ENCODE measurements at regions of chr19 and their contacts with region 1.

Region 1: DNA sequence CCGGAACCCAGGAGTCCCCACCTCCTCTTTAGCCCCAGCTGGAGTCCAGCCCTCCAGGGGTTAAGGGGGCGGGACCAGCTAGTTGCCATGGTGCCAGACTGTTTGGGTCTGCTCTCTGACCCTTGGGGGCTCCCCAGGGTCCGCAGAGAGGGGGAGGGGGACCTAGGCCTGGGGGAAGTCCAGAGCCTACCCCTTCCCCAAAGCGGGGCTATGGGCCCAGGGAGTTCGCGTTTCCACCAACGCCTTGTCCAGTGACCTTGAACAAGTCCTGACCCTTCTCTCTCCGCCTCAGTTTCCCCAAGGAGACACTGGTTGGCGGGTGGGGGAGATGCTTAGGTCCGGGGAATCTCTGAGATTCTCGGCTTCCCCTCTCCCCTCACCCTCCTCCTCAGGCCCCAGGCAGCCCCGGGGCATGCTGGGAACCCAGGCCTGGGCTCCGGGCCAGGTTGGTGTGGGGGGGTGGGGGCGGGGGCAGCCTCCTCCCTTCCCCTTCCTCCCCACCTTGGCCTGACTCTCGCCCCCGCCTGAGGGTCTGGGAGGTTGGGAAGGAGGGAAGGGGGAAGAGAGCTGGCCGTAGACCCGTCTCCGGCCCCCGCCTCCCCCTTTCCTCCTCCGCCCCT is 2.6 kb upstream of the SPACA6 start:
- DNase-seq: peak; percentile 51 to 91
- H3K4me3 ChIP-seq: peak overlapping the region; percentile 63
- CTCF ChIP-seq: no peak
- POLR2A ChIP-seq: no peak

Region 2: GRCh38 chr19:51719251-51719988 is 28.9 kb after region 1 on chr19:
- intact Hi-C with region 1: loop called (anchors 2 kb)
- DNase-seq: no peak
- H3K4me3 ChIP-seq: no peak overlapping the region
- CTCF ChIP-seq: no peak
- POLR2A ChIP-seq: no peak

Measured in lower leg skin (tissue), 4 donors.